Cardiac septum (tissue), 1 donor: ENCODE measurements at regions of chr9 and their contacts with region 1.

Region 1: DNA sequence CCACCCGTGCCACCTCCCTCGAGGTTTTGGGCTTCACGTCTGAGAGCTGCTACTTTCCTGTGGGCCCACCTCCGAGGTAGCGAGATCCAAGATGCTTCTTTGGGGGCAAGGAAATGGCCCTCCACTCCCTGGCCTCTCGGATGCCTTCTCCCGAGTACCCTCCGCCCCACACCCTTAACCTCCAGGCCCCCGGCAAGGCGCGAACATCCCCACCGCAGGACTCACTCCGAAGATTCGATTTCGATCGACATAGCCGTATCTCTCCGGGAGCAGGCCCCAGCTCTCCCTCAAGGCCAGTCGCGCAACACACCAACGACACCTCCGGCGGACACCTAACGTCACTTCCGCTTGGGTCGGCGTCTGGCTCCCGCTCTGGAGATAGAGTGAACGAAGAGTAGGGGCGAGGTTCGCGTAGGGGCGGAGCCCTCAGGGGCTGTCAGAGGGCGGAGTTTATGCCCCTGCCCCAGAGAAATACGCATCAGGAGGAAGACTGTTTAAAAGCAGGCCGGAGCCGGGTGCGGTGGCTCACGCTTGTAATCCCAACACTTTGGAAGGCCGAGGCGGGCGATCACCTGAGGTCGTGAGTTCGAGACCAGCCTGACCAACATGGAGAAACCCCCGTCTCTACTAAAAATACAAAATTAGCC is at the start of gene SMU1:
- DNase-seq: peak; percentile 99
- total RNA-seq, gene SMU1: 16.4 TPM

Region 2: GRCh38 chr9:33024966-33025571 is 51.4 kb before region 1 on chr9 and contains the start of gene DNAJA1:
- intact Hi-C with region 1: loop called (anchors 5 kb)
- DNase-seq: peak; percentile 98
- total RNA-seq, gene DNAJA1: 87.6 TPM

Region 3: GRCh38 chr9:33139421-33140228 is 63.1 kb after region 1 on chr9:
- intact Hi-C with region 1: loop called (anchors 5 kb)
- DNase-seq: peak; percentile 86

Region 4: DNA sequence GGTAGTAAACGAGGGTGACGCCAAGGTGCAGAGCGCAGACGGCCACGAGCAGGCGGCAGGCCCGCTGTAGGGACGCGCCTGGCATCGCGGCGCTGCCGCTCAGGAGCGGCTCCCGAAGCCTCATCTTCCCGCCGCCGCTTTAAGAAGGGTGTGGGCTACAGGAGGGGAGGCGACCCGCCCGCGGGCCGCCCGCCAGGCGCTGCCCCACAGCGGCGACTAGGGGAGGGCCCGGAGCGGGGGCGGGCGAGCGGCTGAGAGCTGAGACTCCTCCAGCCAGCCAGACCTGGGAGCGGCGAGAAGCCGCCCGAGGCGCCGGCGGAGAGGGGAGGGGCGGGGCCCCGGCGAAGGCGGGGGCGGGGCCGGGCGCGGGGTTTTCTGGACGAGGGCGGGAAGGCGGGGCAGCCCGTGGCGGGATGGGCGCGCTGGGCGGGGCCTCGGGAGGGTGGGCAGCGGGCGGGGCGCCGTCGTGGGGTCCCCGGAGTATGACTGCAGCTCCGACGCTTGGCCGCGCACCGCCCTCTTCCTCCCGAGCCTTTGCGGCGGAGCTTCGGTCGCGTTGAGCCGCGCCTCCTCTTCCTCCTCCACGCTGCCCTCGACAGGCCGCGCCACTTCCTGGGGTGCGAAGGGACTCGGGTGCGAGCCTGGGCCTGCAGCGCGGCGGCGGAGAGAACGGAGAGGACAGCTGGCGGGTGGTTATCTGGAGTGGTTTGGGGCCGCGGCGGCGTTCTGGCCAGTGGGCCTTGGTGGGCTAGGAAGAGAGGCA is 90.7 kb after region 1 on chr9 and contains the start of gene B4GALT1:
- intact Hi-C with region 1: loop called (anchors 5 kb)
- DNase-seq: peak; percentile 99
- total RNA-seq, gene B4GALT1: 35.7 TPM

Region 5: GRCh38 chr9:33225319-33226149 is 149.1 kb after region 1 on chr9:
- intact Hi-C with region 1: loop called (anchors 1 kb)
- DNase-seq: no peak